K562 (cell line): ENCODE measurements at regions of chr11 and their contacts with region 1.

Region 1: DNA sequence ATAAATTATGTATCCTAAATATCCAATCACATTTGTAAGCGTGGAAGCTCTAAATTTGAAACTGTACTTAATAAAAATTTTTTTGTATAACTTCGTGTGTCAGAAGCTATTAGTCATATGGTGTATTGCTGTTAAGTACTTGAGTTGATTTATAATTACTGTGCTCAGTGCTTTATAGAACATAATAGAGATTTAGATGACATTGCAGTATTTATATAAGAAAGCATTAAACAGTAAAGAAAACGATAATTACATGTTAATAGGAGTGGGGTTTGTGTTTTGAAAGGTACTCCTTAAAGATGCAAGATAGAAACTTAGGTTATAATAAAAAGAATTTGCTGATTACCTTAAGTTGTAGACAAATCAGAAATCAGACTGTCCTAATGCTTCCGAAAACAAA is 5.9 kb upstream of the TCP11L1 start:
- DNase-seq: no peak
- ATAC-seq: no peak
- H3K4me3 ChIP-seq: no peak overlapping the region
- H3K27ac ChIP-seq: no peak overlapping the region
- H3K4me1 ChIP-seq: peaks cover 0 to 1% of the 10 kb centered on the region in 2 experiments; a peak in 1 of 5 replicates
- H3K27me3 ChIP-seq: no peaks in the 10 kb centered on the region
- CTCF ChIP-seq: no peak
- EP300 ChIP-seq: no peak
- POLR2A ChIP-seq: no peak
- RAD21 ChIP-seq: no peak

Region 2: DNA sequence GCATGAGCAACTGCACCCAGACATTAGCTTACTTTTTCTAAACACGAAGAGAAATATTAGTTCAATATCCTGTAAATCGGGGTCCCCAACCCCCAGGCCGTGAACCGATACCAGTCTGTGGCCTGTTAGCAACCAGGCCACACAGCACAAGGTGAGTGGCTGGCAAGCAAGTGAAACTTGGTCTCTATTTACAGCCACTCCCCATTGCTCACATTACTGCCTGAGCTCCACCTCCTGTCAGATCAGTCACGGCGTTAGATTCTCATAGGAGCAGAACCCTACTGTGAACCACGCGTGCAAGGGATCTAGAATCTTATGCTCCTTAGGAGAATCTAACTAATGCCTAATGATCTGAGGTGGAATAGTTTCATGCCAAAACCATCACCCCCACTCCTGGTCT is 45.6 kb before region 1 on chr11:
- CTCF ChIA-PET with region 1: no interaction called
- POLR2A ChIA-PET with region 1: no interaction called
- in situ Hi-C with region 1: no loop called
- intact Hi-C with region 1: no loop called
- DNase-seq: no peak
- ATAC-seq: peak; percentile 57
- H3K4me3 ChIP-seq: no peak overlapping the region
- H3K27ac ChIP-seq: no peak overlapping the region
- H3K4me1 ChIP-seq: peaks cover 0 to 2% of the 10 kb centered on the region in 2 experiments; a peak in 1 of 5 replicates
- H3K27me3 ChIP-seq: no peaks in the 10 kb centered on the region
- CTCF ChIP-seq: no peak
- EP300 ChIP-seq: no peak
- POLR2A ChIP-seq: no peak
- RAD21 ChIP-seq: no peak

Region 3: DNA sequence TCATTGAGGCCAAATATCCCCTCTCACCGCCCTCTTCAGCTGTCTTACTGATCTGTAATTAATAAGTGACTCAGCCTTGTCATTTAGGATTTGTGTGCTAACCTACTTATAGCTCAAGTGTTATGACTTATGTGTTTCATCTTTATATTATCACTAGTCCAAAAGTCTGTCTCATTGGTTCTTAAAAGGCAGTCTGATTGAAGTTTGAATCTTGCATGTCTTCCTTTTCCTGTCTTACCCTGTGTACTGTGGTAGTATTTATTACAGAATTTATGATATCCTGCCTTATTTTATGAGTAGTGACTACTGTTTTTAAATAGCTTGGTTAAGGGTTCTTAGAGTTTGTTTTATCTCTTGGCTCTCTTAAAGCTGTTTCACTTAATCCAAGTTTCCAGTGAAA is 11.6 kb before region 1 on chr11:
- CTCF ChIA-PET with region 1: interaction called, 3 read pairs
- POLR2A ChIA-PET with region 1: interaction called, 25 read pairs
- in situ Hi-C with region 1: no loop called
- intact Hi-C with region 1: no loop called
- DNase-seq: no peak
- ATAC-seq: no peak
- H3K4me3 ChIP-seq: no peak overlapping the region
- H3K27ac ChIP-seq: no peak overlapping the region
- H3K4me1 ChIP-seq: peaks cover 0 to 11% of the 10 kb centered on the region in 2 experiments; a peak in 2 of 5 replicates
- H3K27me3 ChIP-seq: no peaks in the 10 kb centered on the region
- CTCF ChIP-seq: no peak
- EP300 ChIP-seq: no peak
- POLR2A ChIP-seq: no peak
- RAD21 ChIP-seq: no peak

Region 4: DNA sequence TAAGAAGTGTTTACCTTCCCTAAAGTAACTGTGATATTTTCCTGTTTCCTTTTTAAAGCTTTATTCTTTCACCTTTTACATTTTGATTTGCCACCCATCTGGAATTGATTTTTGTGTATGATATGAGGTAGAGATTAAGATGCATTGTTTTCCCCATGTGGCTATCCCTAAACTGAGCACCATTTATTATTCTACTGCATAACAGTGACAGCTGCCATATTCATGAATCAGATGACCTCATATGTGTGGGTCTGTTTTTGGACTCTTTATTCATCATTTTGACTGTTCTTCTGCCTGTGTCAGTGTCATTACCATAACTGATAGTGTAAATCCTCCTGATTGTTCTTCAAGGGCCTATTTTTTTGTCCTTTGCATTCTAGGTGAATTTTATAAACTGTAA is 274.5 kb after region 1 on chr11:
- CTCF ChIA-PET with region 1: no interaction called
- POLR2A ChIA-PET with region 1: no interaction called
- in situ Hi-C with region 1: no loop called
- intact Hi-C with region 1: no loop called
- DNase-seq: no peak
- ATAC-seq: no peak
- H3K4me3 ChIP-seq: no peak overlapping the region
- H3K27ac ChIP-seq: no peak overlapping the region
- H3K4me1 ChIP-seq: no peaks in the 10 kb centered on the region; a peak in 1 of 5 replicates
- H3K27me3 ChIP-seq: no peaks in the 10 kb centered on the region
- CTCF ChIP-seq: no peak
- EP300 ChIP-seq: no peak
- POLR2A ChIP-seq: no peak
- RAD21 ChIP-seq: no peak